ENCODE measurements at regions of chr3 and their contacts with region 1.

Region 1: GRCh38 chr3:58034738-58035523 is 26.7 kb downstream of the FLNB start:
- DNase-seq: peak; percentile 96
- ATAC-seq: peak; percentile 96
- H3K4me3 ChIP-seq: peak overlapping the region; percentile 8; the same call in 1 of the 2 replicates
- H3K27ac ChIP-seq: peak overlapping the region; percentile 85
- H3K4me1 ChIP-seq: peaks cover 44% of the 10 kb centered on the region
- H3K27me3 ChIP-seq: no peaks in the 10 kb centered on the region
- CTCF ChIP-seq: no peak
- EP300 ChIP-seq: peak; percentile 92 to 96
- POLR2A ChIP-seq: no peak
- RAD21 ChIP-seq: no peak

Region 2: GRCh38 chr3:58013973-58014649 is 20.8 kb before region 1 on chr3:
- CTCF ChIA-PET with region 1: interaction called, 28 read pairs
- POLR2A ChIA-PET with region 1: interaction called, 75 read pairs
- RAD21 ChIA-PET with region 1: interaction called, 110 read pairs
- SMC1A ChIA-PET with region 1: interaction called, 135 read pairs
- in situ Hi-C with region 1: no loop called
- intact Hi-C with region 1: loop called (anchors 2 kb)
- DNase-seq: no peak
- ATAC-seq: no peak
- H3K4me3 ChIP-seq: no peak overlapping the region
- H3K27ac ChIP-seq: no peak overlapping the region
- H3K4me1 ChIP-seq: peaks cover 16% of the 10 kb centered on the region
- H3K27me3 ChIP-seq: no peaks in the 10 kb centered on the region
- CTCF ChIP-seq: no peak
- EP300 ChIP-seq: no peak
- POLR2A ChIP-seq: no peak
- RAD21 ChIP-seq: no peak

Region 3: DNA sequence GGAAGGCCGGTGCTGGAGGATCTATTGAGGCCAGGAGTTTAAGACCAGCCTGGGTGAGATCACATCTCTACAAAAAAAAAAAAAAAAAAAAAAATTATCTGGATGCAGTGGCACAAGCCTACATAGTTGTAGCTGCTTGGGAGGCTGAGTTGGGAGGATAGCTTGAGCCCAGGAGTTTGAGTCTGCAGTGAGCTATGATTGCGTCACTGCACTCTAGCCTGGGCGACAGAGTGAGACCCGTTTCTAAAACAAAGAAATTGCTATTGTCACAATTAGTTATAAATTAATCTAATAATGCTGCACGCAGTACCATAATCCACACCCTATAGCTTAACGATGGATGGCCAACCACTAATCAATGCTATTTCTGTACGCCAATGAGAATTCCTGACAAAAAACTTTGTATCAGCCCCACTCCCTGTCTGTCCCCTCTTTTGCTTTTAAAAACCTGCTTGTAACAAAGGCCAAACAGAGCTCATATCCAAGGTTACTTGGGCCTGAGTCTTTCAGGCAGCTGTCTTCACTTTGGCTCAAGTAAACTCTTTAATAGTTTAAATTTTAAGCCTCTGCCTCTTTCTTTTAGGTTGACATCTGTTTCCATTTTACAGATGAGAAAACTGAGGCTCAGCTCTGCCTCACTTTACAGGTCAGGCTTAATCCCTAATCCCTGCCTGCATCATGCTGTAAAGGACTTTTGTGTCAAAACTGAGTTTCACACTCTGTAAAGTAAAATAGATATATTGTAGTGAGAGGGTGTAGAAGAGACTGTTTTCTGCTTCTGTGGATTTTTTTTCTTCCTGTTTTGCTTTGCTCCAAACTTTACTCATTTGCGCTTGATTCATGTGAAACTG is 15.8 kb before region 1 on chr3:
- CTCF ChIA-PET with region 1: interaction called, 28 read pairs
- POLR2A ChIA-PET with region 1: interaction called, 75 read pairs
- RAD21 ChIA-PET with region 1: interaction called, 110 read pairs
- SMC1A ChIA-PET with region 1: interaction called, 135 read pairs
- in situ Hi-C with region 1: no loop called
- intact Hi-C with region 1: no loop called
- DNase-seq: no peak
- ATAC-seq: peak; percentile 25
- H3K4me3 ChIP-seq: no peak overlapping the region
- H3K27ac ChIP-seq: 0 out of 2 replicates have a peak overlapping the region, but pooled peaks have one; percentile 20
- H3K4me1 ChIP-seq: peaks cover 13% of the 10 kb centered on the region
- H3K27me3 ChIP-seq: no peaks in the 10 kb centered on the region
- CTCF ChIP-seq: no peak
- EP300 ChIP-seq: no peak
- POLR2A ChIP-seq: no peak
- RAD21 ChIP-seq: no peak

Region 4: DNA sequence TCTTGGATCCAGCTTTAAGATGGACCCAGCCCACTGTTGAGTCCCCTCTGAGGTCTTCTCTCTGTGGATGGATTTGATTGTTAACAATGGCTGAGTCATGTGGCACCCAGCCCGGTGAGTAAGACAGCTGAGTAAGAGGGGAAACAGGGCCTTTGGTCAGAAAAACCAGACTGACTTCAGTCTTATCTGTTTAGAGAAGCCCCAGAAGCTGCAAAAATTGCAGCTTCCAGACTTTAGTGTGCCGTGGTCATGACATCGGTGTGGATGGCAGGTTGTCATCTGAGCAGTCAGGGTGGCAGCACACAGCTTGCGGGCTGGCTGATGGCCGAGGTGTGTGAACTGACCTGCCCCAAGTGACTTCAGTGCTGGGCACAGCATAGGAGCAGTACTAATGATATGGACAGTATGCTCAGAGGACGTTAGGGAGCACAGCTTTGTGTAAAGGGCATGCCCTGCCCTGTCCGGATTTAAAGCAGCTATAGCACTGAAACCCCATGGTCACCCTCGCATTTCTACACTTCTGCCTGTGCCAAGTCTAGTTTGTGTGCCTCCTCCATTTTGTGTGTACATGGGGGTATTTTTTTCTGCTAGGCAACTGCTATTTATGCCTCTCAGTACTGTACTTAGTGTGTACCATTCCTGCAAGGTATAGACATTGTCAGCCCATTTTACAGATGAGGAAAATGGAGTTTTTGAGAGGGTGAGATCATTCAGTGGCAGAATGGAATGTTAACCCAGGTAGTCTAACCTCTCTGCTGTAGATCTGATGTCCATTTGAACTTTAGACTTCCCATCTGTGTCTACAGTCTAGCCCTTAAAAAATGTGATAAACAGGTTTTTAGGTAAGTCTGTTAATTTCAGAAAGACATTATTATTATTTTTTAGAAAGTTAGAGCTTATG is 17.7 kb after region 1 on chr3:
- CTCF ChIA-PET with region 1: interaction called, 5 read pairs
- POLR2A ChIA-PET with region 1: interaction called, 10 read pairs
- RAD21 ChIA-PET with region 1: interaction called, 10 read pairs
- SMC1A ChIA-PET with region 1: interaction called, 8 read pairs
- in situ Hi-C with region 1: no loop called
- intact Hi-C with region 1: no loop called
- DNase-seq: no peak
- ATAC-seq: peak; percentile 78
- H3K4me3 ChIP-seq: no peak overlapping the region
- H3K27ac ChIP-seq: no peak overlapping the region
- H3K4me1 ChIP-seq: no peaks in the 10 kb centered on the region
- H3K27me3 ChIP-seq: no peaks in the 10 kb centered on the region
- CTCF ChIP-seq: no peak
- EP300 ChIP-seq: no peak
- POLR2A ChIP-seq: no peak
- RAD21 ChIP-seq: no peak